Activated T-helper 2 cell treated with anti-CD3 and anti-CD28 coated beads, Interferon-gamma antibody, Interleukin-2, Interleukin-4, amounts not matched to agents 10 μg/mL and 5 μg/mL and 100 μg/mL, durations not matched to agents 14 hours and 24 hours and 36 hours (primary cell): ENCODE measurements at regions of chr1 and their contacts with region 1.

Region 1: DNA sequence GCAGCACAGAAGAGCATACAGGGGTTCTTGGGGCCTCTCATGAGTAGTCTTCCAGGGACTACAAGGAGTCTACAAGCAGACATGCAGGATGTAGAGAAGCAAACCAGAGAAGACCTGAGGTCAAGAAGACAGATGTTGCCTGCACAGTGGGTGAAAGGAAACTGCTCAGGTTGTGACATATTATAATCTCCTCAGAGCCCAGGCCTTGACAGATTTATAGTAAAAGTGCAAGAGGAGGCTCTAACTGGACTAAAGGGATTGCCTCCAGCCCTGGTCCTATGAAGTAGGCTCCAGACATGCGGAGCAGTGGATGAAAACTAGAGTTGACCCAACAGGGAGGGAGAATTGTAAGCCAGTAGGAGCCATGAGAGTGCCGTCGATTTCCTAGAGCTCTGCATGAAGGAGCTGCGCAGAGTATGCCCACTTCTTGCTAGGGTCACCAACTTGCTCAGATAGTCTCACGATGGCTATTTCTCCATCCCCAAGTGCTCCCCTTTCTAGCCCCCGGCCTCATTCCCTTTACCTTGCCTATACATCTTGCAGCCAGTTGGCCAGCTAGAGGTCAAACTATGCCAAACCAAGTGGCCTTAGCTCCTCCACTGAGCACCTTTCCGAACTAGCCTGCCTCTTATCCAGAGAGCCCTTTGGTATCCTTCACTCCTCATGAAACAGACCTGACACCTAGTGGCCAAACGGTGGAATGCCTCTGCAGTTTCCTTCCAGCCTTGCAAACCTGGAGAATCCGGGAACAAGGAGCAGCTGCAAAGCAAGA is 36.2 kb upstream of the IPO9 start:
- DNase-seq: peak; percentile 22
- H3K4me3 Mint-ChIP-seq: no peak overlapping the region
- H3K27ac Mint-ChIP-seq: no peak overlapping the region
- H3K4me1 Mint-ChIP-seq: peaks cover 7% of the 10 kb centered on the region
- H3K27me3 Mint-ChIP-seq: peaks cover under 1% of the 10 kb centered on the region

Region 2: GRCh38 chr1:201559679-201560162 is 233.0 kb before region 1 on chr1:
- intact Hi-C with region 1: loop called (anchors 1 kb)
- DNase-seq: peak; percentile 45
- H3K4me3 Mint-ChIP-seq: no peak overlapping the region
- H3K27ac Mint-ChIP-seq: no peak overlapping the region
- H3K4me1 Mint-ChIP-seq: peaks cover 2% of the 10 kb centered on the region
- H3K27me3 Mint-ChIP-seq: no peaks in the 10 kb centered on the region

Region 3: GRCh38 chr1:201709564-201710295 is 83.0 kb before region 1 on chr1:
- intact Hi-C with region 1: loop called (anchors 1 kb)
- DNase-seq: peak; percentile 31
- H3K4me3 Mint-ChIP-seq: no peak overlapping the region
- H3K27ac Mint-ChIP-seq: no peak overlapping the region
- H3K4me1 Mint-ChIP-seq: peaks cover 2% of the 10 kb centered on the region
- H3K27me3 Mint-ChIP-seq: no peaks in the 10 kb centered on the region

Region 4: GRCh38 chr1:201807958-201808632 is 15.4 kb after region 1 on chr1:
- intact Hi-C with region 1: no loop called
- DNase-seq: no peak
- H3K4me3 Mint-ChIP-seq: no peak overlapping the region
- H3K27ac Mint-ChIP-seq: no peak overlapping the region
- H3K4me1 Mint-ChIP-seq: no peaks in the 10 kb centered on the region
- H3K27me3 Mint-ChIP-seq: no peaks in the 10 kb centered on the region

Region 5: DNA sequence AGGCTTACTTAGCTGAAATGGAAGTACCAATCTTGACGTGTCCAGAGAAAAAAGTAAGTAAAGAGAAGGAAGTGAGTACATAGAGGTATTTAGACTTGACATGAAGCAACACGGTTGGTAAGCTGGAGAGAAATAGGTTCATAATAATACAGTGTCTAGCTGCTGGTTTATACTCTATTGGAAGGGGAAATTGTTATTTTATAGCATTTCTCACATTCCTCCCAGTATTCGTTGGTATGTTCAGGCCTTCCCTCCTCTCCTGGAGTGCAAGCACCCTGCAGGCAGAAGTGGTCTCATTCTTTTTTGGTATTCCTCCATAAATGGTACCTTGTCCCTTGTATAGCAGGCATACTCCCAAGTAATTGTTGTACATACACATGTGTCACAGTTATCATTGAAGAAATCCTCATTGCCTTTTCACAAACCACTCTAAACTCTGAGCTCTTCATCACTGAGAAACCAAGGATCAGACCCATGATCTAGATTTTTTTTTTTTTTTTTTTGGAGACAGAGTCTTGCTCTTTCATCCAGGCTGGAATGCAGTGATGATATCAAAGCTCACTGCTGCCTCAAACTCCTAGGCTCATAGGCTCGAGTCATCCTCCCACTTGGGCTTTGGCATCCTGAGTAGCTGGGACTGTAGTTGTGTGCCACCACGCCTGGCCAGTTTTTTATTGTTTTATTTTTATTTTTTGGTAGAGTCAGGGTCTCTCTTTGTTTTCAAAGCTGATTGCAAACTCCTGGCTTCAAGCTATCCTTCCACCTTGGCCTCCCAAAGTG is 26.4 kb after region 1 on chr1:
- intact Hi-C with region 1: no loop called
- DNase-seq: no peak
- H3K4me3 Mint-ChIP-seq: no peak overlapping the region
- H3K27ac Mint-ChIP-seq: no peak overlapping the region
- H3K4me1 Mint-ChIP-seq: no peaks in the 10 kb centered on the region
- H3K27me3 Mint-ChIP-seq: no peaks in the 10 kb centered on the region